ENCODE measurements at regions of chr11 and their contacts with region 1.

Region 1: GRCh38 chr11:35138943-35139721 is at the start of gene CD44:
- DNase-seq: peak; percentile 72 to 94 (median 80)
- ATAC-seq: peak; percentile 77 to 78
- H3K4me3 Mint-ChIP-seq: peak within 1 kb of the TSS; percentile 86 to 100 (median 97)
- H3K27ac Mint-ChIP-seq: peak within 1 kb of the TSS; percentile 92 to 99 (median 96)
- H3K4me1 Mint-ChIP-seq: peaks cover 30 to 60% (median 52%) of the 10 kb centered on the region in 4 donors
- H3K27me3 Mint-ChIP-seq: peaks cover 0 to 2% (median 0%) of the 10 kb centered on the region in 5 donors
- polyA plus RNA-seq, gene CD44: 291 TPM

Region 2: DNA sequence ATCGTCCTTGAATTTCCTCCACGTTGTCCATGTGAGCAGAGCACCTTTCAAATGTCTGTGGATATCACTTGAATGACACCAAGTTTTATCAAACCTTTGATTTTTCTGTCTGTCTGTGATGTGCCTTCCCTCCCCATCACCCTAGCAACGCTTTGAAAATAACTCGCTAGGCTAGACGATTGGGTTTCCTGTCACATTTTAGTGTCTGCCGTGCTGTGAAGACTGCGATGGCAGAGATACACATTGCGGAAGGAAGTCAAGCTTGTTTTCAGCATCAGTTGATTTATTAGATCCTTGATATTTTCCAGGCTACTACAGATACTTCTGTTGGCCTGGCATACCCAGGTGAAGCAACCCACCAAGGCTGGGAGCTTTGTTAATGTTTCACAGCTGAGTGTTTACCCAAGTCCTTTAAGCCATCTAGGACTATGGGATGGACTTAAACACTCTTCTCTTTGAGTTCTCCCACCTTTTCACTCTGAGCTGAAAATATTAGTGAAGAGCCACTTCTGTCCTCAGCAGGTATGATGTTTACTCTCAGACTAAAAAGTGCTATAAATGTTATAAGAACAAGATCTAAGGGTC is 93.8 kb before region 1 on chr11:
- POLR2A ChIA-PET with region 1: interaction called, 39 read pairs
- DNase-seq: peak; percentile 40 to 95 (median 86)
- ATAC-seq: peak; percentile 70 to 82
- H3K4me3 Mint-ChIP-seq: peak overlapping the region; percentile 70 to 96 (median 88)
- H3K27ac Mint-ChIP-seq: peak overlapping the region; percentile 97 to 100 (median 100)
- H3K4me1 Mint-ChIP-seq: peaks cover 31 to 92% (median 78%) of the 10 kb centered on the region in 4 donors
- H3K27me3 Mint-ChIP-seq: no peaks in the 10 kb centered on the region

Region 3: DNA sequence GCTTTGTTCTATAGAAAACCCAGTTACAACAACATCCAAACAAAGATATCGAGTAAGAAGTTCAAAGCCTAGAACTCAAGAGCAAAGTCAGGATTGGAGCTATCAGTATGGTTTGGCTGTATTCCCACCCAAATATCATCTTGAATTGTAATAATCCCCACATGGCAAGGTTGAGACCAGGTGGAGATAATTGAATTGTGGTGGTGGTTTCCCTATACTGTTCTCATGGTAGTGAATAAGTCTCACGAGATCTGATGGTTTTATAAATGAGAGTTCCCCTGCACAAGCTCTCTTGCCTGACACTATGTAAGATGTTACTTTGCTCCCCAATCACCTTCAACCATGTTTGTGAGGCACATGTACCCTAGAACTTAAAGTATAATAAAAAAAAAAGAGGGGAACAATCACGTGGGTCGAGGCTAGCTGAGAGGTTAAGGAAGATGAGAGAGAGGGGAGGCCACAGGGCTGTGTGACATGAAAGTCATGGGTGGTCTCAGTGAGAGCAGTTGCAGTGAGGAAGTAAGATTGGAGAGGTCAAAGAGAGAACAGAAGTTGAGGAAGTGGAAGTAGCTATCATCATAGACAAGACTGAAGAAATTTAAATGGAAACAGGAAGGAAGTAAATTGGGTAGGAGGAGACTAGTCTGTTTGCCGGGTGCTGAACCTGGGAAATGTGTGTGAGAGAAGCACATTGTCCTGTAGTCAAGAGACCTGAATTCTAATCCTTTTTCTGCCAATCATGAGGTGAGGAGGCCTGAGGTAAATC is 80.3 kb before region 1 on chr11:
- POLR2A ChIA-PET with region 1: interaction called, 13 read pairs
- DNase-seq: no peak
- ATAC-seq: peak; percentile 69
- H3K4me3 Mint-ChIP-seq: peak overlapping the region in 9 of 10 donors; percentile 2 to 73 (median 43)
- H3K27ac Mint-ChIP-seq: peak overlapping the region; percentile 72 to 94 (median 89)
- H3K4me1 Mint-ChIP-seq: peaks cover 25 to 41% (median 38%) of the 10 kb centered on the region in 4 donors
- H3K27me3 Mint-ChIP-seq: no peaks in the 10 kb centered on the region

Region 4: DNA sequence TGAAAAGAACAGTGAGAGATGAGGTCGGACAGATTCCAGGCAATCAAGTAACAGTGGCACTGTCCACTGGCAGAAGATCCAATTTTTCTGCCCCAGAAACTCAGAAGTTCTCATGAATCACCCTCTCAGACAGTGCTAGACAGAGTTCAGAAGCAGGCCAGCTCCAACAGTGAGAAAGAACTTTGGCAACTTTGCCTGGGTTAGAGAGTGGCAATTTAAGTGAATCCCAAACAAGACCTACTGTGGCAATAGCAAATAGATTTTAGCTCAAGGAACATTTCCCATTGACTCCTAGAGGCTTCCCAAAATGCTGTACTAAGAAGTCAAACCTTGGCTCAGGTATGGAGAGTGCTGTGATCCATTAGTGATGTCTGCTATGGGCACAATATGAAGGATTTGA is 12.1 kb after region 1 on chr11:
- POLR2A ChIA-PET with region 1: interaction called, 30 read pairs
- DNase-seq: no peak
- ATAC-seq: no peak
- H3K4me3 Mint-ChIP-seq: peak overlapping the region in 9 of 10 donors; percentile 36 to 74 (median 61)
- H3K27ac Mint-ChIP-seq: peak overlapping the region; percentile 83 to 95 (median 92)
- H3K4me1 Mint-ChIP-seq: peaks cover 68 to 100% (median 100%) of the 10 kb centered on the region in 4 donors
- H3K27me3 Mint-ChIP-seq: no peaks in the 10 kb centered on the region

Region 5: DNA sequence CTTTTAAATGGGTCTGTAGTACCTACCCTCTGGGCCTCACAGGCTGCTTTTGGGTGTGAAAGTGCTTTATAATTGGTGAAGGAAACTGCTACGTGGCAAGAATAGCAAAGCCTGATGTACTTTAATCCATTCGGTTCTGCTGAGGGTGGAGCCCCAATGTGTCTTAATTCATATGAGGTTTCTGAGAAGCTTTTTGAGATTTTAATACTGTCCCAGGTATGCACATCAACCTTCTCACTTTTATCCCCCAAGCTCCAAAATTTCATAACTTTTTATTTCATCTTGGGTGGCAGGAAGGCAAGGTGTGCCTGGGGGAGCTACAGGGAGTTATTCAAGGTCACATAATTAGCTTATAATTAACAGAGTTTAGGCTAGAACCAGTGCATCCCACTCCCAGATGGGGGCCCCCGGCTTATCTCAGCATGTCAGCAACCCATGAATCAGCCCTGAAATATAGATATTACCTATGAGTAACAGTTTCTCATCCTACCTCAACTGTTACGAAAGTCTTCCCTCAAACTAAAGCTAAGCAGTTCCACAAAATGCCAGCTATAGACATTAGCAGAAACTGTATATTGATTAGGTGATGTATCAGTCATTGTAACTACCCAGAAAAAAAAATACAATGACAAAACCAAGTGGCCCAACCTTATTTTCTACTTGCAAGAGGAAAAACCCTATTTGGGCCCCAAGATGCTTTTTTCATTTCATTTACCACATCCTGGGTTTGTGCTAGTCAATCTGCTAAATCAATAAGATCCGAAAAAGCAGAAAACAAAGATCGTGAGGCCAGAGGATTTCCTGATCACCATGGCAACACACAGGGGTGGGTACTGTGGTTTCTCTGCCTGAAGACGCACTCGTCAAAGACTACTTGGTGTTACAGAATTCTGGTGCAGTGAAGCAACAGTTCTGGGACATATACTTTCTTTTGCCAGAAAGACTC is 26.6 kb after region 1 on chr11:
- POLR2A ChIA-PET with region 1: interaction called, 163 read pairs
- DNase-seq: peak; percentile 67 to 99 (median 94)
- ATAC-seq: peak; percentile 62 to 78
- H3K4me3 Mint-ChIP-seq: peak overlapping the region; percentile 61 to 91 (median 82)
- H3K27ac Mint-ChIP-seq: peak overlapping the region; percentile 89 to 100 (median 100)
- H3K4me1 Mint-ChIP-seq: peaks cover 58 to 100% (median 100%) of the 10 kb centered on the region in 4 donors
- H3K27me3 Mint-ChIP-seq: peaks cover 0 to 2% (median 0%) of the 10 kb centered on the region in 5 donors

Region 6: DNA sequence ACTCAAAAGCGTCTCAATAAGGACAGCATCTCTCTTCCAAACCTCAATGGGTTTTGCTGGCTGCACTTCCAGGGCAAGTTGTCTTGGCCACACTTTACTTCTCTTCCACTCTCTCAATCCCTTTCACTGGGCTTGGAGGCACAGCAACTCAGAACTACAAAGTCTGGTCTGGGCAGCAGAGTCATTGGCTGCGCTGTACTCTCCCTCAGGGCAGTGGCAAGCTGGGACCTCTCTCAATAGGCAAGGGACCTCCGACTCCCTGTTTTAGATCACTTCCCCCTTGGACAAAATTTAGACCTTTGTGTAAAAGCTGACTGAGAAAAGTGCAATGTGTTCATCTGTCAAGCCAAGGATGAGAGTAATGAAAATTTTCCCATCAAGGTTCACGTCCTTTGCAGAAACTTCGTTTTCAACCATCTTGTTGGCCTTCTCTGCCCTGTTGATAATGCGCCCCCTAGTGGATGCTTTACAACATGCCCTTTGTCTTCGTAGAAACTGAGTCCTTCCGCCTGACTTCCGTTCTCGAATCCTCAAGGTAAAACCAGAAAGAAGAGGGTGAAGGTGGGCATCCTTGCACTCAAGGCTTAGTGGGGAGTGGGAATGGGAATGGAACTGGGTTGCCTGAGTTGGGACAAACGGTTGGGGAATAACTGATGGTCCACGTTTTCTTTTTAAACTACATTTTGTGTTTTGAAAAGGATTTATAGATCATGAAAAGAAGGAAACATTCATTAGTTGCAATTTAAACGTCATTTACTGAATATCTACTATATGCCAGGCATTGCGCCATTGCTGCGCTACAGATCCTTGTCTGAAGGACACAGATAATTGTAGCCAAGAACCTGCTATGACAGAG is 99.0 kb after region 1 on chr11:
- POLR2A ChIA-PET with region 1: interaction called, 14 read pairs
- DNase-seq: peak in 8 of 10 donors; percentile 36 to 80 (median 50)
- ATAC-seq: no peak
- H3K4me3 Mint-ChIP-seq: peak overlapping the region in 4 of 10 donors; percentile 5 to 76 (median 42)
- H3K27ac Mint-ChIP-seq: peak overlapping the region in 9 of 10 donors; percentile 28 to 92 (median 86)
- H3K4me1 Mint-ChIP-seq: peaks cover 55 to 85% (median 79%) of the 10 kb centered on the region in 4 donors
- H3K27me3 Mint-ChIP-seq: no peaks in the 10 kb centered on the region

Region 7: GRCh38 chr11:35367491-35367890 is 228.4 kb after region 1 on chr11:
- POLR2A ChIA-PET with region 1: no interaction called
- DNase-seq: no peak
- ATAC-seq: no peak
- H3K4me3 Mint-ChIP-seq: no peak overlapping the region
- H3K27ac Mint-ChIP-seq: no peak overlapping the region
- H3K4me1 Mint-ChIP-seq: peaks cover 0 to 3% (median 0%) of the 10 kb centered on the region in 4 donors
- H3K27me3 Mint-ChIP-seq: peaks cover 0 to 8% (median 3%) of the 10 kb centered on the region in 5 donors